ENCODE measurements at regions of chr1 and their contacts with region 1.

Region 1: GRCh38 chr1:202998836-202999750 is 8.1 kb upstream of the TMEM183A start:
- DNase-seq: no peak
- H3K4me3 ChIP-seq: no peak overlapping the region
- H3K27me3 ChIP-seq: peaks cover 3% of the 10 kb centered on the region
- CTCF ChIP-seq: peak; percentile 79

Region 2: DNA sequence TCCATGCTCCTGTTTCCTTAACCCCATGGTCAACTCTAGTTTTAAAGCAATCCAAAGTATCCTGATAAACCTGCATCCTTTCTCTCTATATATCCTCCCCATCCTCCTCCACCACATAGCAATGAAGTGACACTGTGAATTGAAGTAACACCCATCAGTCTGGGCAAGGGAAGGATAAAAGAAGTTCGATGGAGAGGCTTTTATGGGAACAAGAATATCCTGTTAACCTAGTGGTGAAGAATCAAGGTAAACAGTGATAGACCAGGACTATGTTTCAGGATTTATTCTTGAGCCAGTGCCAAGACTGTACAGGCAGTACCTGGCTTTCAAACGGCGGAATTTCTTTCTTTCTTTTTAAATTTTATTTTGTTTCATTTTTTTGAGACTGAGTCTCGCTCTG is 127.7 kb before region 1 on chr1:
- CTCF ChIA-PET with region 1: no interaction called
- POLR2A ChIA-PET with region 1: no interaction called
- DNase-seq: no peak
- H3K4me3 ChIP-seq: no peak overlapping the region
- H3K27me3 ChIP-seq: no peaks in the 10 kb centered on the region
- CTCF ChIP-seq: no peak

Region 3: GRCh38 chr1:202987922-202988583 is 11.0 kb before region 1 on chr1:
- CTCF ChIA-PET with region 1: interaction called, 15 read pairs
- POLR2A ChIA-PET with region 1: no interaction called
- DNase-seq: no peak
- H3K4me3 ChIP-seq: no peak overlapping the region
- H3K27me3 ChIP-seq: peaks cover 16% of the 10 kb centered on the region
- CTCF ChIP-seq: no peak

Measured in BJ (cell line).